ENCODE measurements at regions of chr7 and their contacts with region 1.

Region 1: DNA sequence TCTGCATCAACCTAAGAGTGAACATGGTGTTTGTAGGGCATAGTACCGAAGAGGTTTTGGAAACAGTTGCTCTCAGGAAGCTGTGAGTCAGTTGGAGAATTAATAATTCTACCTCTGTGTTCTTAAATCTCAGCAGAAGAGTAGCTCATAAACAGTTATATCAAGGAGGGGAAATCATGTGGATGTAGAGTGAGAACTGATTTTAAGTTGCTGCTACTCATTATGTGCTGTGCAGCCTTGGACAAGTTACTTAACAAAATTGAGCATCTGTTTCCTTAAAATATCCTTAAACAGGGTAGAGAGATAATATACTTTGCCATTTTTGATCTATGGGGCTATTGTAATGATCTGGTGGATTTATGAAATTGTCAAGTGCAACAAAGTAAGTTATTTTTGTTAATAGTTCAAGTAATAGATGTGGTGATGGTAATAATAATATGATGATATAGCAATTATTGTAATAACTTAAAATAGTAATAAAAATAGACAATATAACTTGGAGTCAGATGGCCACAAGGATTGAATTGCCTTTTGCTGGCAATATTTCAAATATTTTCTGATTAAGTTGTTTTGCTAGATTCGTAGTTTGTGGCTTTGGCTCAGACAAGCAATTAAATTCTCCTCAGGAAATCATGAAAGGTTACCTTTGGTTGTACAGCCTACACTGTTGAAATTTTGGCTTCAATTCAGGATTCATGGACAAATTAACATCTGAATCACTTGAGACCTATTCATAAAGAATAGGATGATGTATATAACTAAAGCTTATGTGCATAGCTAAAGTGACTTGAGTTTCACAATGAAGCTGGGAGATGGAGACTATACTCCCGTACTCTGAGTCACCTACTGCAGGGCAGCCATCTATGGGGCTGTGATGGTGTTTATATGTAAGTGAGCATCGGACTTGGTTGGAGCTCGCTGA is 228.5 kb downstream of the CDK14 start:
- DNase-seq: no peak
- H3K4me3 ChIP-seq: no peak overlapping the region
- H3K27ac ChIP-seq: no peak overlapping the region
- H3K4me1 ChIP-seq: no peaks in the 10 kb centered on the region
- CTCF ChIP-seq: no peak

Region 2: GRCh38 chr7:90853205-90853604 is 28.6 kb after region 1 on chr7:
- CTCF ChIA-PET with region 1: interaction called, 18 read pairs
- POLR2A ChIA-PET with region 1: interaction called, 3 read pairs
- intact Hi-C with region 1: no loop called
- DNase-seq: no peak
- H3K4me3 ChIP-seq: no peak overlapping the region
- H3K27ac ChIP-seq: no peak overlapping the region
- H3K4me1 ChIP-seq: no peaks in the 10 kb centered on the region
- CTCF ChIP-seq: no peak

Region 3: DNA sequence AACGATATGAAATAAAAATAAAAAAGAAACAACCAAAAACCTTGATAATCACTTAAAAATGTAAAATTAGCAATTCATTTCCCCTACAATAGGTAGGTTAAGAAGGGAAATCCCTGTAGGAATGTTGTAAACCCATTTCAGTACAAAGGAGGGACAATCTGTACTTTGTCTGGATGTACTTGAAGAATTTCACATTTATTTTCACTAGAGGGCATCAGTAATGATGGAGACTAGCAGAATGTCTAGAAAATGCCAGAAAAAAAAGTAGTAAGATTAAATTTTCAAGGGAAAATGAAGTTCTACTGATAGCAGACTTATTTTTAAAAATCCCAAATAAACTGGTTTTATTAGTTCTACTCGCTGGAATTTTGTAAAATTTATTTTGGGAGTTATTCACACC is 230.6 kb after region 1 on chr7:
- CTCF ChIA-PET with region 1: no interaction called
- POLR2A ChIA-PET with region 1: no interaction called
- intact Hi-C with region 1: no loop called
- DNase-seq: no peak
- H3K4me3 ChIP-seq: no peak overlapping the region
- H3K27ac ChIP-seq: no peak overlapping the region
- H3K4me1 ChIP-seq: no peaks in the 10 kb centered on the region
- CTCF ChIP-seq: peak; percentile 48

Region 4: DNA sequence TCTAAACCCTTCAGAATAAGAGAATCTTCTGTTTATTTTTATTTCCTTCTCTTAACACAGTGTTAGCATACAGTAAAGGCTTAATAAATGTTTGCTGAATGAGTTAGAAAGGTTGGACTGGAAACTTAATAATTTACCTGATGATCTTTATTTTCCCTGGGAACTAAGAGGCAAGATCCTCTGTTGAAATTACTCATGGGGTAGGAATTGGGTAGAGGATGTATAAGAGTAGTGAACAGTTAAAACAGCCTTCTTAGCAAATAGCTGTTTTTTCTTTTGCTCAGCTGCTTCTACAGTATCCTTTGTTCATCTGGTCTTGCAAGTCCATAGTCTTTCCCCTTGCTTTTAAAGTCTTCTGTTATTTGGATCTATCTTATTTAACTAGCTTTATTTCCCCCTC is 1196.0 kb after region 1 on chr7:
- CTCF ChIA-PET with region 1: no interaction called
- POLR2A ChIA-PET with region 1: no interaction called
- intact Hi-C with region 1: no loop called
- DNase-seq: no peak
- H3K4me3 ChIP-seq: no peak overlapping the region
- H3K27ac ChIP-seq: no peak overlapping the region
- H3K4me1 ChIP-seq: no peaks in the 10 kb centered on the region
- CTCF ChIP-seq: no peak